ENCODE measurements at regions of chr3 and their contacts with region 1.

Region 1: DNA sequence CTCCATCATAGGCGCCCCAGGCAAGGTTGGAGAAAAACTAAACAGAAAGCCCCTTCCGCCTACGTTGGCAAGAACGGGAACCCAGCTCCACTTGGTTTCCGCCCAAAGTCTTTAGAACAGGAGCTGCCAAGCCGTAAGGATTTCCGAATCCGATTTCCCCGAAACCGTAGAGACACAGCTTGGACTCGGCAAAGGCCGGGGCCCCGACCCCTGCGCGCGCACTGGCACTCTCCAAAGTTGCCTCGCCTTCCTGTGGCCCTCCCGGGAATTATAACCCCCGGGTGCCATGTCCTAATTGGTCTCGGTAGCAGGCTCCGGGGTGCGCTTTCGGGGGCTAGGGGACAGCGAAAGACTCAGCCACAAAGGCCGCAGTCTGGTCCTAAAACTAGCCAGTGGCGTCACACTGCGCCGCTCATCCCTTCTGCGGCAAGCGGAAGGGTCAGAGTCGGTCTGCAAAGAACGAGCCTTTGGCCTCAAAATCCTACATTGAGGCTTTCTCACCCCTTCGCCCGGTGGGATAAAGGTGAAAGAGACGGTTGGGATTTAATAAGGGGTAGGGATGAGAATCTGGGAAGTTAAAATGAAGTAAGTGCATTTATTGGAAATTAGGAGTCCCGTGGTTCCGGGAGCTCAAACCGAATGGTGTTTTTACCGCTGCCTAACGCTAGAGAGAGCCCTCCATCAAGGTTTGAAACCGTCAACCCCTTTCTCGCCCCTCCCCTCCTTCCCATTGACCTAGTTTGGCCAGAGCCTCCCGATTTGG is 6.8 kb downstream of the BCL6 start:
- DNase-seq: peak; percentile 95
- H3K4me3 Mint-ChIP-seq: peak overlapping the region; percentile 98
- H3K27ac Mint-ChIP-seq: peak overlapping the region; percentile 100
- H3K4me1 Mint-ChIP-seq: peaks cover 44% of the 10 kb centered on the region
- H3K27me3 Mint-ChIP-seq: no peaks in the 10 kb centered on the region
- CTCF ChIP-seq: peak; percentile 63

Region 2: GRCh38 chr3:187491371-187491770 is 247.1 kb before region 1 on chr3:
- CTCF ChIA-PET with region 1: no interaction called
- POLR2A ChIA-PET with region 1: no interaction called
- intact Hi-C with region 1: no loop called
- DNase-seq: no peak
- H3K4me3 Mint-ChIP-seq: no peak overlapping the region
- H3K27ac Mint-ChIP-seq: no peak overlapping the region
- H3K4me1 Mint-ChIP-seq: no peaks in the 10 kb centered on the region
- H3K27me3 Mint-ChIP-seq: peaks cover 48% of the 10 kb centered on the region
- CTCF ChIP-seq: no peak

Region 3: GRCh38 chr3:187811585-187812250 is 73.2 kb after region 1 on chr3:
- CTCF ChIA-PET with region 1: interaction called, 17 read pairs
- POLR2A ChIA-PET with region 1: interaction called, 227 read pairs
- intact Hi-C with region 1: no loop called
- DNase-seq: peak; percentile 83
- H3K4me3 Mint-ChIP-seq: no peak overlapping the region
- H3K27ac Mint-ChIP-seq: peak overlapping the region; percentile 44
- H3K4me1 Mint-ChIP-seq: peaks cover 31% of the 10 kb centered on the region
- H3K27me3 Mint-ChIP-seq: no peaks in the 10 kb centered on the region
- CTCF ChIP-seq: no peak

Region 4: DNA sequence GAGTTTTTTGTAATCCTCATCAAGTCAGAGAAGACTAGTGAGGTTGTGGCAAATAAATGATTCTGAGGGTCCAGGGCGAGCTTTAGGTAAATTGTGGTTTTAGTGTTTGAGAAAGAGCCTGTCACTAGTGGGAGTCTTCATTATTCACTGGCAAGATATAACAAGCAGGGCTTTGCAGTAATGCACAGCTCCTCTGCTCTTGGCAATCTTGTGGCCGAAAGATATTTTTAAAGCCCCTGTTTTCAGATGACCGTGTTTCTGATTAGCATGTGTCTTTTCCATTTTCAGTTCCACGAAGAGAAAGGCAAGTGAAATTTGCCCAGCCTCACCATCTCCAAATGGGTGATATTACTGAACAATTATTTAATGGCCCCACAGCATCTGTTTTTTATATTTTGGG is 160.7 kb after region 1 on chr3:
- CTCF ChIA-PET with region 1: no interaction called
- POLR2A ChIA-PET with region 1: no interaction called
- intact Hi-C with region 1: no loop called
- DNase-seq: no peak
- H3K4me3 Mint-ChIP-seq: no peak overlapping the region
- H3K27ac Mint-ChIP-seq: no peak overlapping the region
- H3K4me1 Mint-ChIP-seq: no peaks in the 10 kb centered on the region
- H3K27me3 Mint-ChIP-seq: no peaks in the 10 kb centered on the region
- CTCF ChIP-seq: no peak

Region 5: DNA sequence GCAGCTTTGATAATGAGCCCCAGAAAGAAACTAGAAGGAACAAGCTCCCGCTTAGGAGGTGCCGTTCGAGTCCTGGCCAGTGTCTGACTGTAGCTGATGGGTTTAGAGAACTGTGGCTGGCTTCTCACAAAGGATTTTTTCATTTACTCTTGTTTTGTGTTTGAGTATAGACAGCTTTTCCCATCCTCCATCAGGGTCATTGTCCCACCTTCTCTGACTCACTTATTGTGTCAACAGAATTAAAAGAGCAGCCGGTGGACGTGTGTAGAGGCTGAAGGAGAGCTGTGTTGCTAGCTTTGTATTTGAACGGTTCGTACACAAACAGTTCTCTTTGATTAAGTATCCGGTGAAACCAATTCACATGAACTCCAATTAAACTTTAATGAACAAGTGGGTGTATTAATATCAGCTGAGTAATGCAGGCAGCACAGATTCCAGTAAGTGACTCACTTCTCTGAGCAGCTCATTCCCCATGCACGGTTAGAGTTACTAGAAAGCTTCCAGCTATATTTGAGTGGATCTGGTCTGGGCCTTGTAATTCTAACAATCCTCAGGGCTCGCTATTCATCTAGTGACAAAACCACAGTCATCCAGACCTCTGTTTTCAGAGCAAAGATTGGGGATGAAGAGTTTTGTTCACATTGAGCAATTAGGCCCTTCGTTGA is 556.4 kb after region 1 on chr3:
- CTCF ChIA-PET with region 1: interaction called, 9 read pairs
- POLR2A ChIA-PET with region 1: interaction called, 12 read pairs
- intact Hi-C with region 1: loop called (anchors 2 kb)
- DNase-seq: peak; percentile 83
- H3K4me3 Mint-ChIP-seq: peak overlapping the region; percentile 29
- H3K27ac Mint-ChIP-seq: peak overlapping the region; percentile 57
- H3K4me1 Mint-ChIP-seq: peaks cover 48% of the 10 kb centered on the region
- H3K27me3 Mint-ChIP-seq: no peaks in the 10 kb centered on the region
- CTCF ChIP-seq: no peak

Region 6: DNA sequence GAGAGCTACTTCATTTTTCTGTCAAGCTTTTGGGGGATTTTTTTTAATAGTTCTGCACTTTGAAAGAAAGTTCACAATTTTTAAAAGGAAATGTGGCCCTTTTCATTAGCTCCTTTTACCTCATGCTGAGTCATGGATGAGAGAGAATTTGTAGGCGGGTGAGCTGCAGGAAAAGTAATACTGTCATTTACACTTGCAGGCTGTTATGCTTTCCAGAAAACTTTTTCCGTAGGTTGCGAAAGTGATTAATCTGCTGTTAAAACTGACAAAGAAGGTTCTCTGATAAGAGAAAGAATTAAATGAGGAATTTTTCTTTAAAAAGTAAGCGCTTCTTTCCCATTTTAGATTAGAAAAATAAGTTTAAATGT is 845.6 kb after region 1 on chr3:
- CTCF ChIA-PET with region 1: interaction called, 4 read pairs
- POLR2A ChIA-PET with region 1: interaction called, 13 read pairs
- intact Hi-C with region 1: no loop called
- DNase-seq: peak; percentile 78
- H3K4me3 Mint-ChIP-seq: peak overlapping the region; percentile 62
- H3K27ac Mint-ChIP-seq: no peak overlapping the region
- H3K4me1 Mint-ChIP-seq: peaks cover 26% of the 10 kb centered on the region
- H3K27me3 Mint-ChIP-seq: no peaks in the 10 kb centered on the region
- CTCF ChIP-seq: no peak

Region 7: DNA sequence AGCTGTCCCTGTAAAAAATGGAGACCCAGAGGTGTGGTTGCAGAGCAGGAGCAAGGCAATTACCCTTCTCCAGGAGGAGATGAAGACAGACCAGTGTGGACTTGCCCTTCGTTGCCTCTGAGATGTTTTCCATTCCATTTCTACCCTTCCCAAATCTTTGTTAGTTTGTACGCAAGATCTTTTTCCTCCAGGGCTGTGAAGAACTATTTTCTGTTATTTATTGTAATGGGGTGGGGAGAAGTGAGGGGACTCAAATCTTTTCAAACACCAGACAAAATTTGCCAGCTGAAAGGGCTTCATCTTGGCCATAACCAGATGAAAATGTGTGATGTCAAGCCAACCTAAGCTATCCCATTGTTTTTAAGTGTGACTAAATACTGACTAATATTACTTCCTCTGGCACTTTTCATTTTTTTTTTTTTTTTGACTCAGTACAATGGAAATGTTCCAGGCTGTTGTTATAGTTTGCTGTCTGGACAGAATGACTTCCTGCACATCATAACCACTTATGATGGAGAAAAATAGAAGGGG is 1162.0 kb after region 1 on chr3:
- CTCF ChIA-PET with region 1: interaction called, 13 read pairs
- POLR2A ChIA-PET with region 1: interaction called, 15 read pairs
- intact Hi-C with region 1: no loop called
- DNase-seq: peak; percentile 87
- H3K4me3 Mint-ChIP-seq: peak overlapping the region; percentile 12
- H3K27ac Mint-ChIP-seq: peak overlapping the region; percentile 80
- H3K4me1 Mint-ChIP-seq: peaks cover 52% of the 10 kb centered on the region
- H3K27me3 Mint-ChIP-seq: no peaks in the 10 kb centered on the region
- CTCF ChIP-seq: no peak

Region 8: DNA sequence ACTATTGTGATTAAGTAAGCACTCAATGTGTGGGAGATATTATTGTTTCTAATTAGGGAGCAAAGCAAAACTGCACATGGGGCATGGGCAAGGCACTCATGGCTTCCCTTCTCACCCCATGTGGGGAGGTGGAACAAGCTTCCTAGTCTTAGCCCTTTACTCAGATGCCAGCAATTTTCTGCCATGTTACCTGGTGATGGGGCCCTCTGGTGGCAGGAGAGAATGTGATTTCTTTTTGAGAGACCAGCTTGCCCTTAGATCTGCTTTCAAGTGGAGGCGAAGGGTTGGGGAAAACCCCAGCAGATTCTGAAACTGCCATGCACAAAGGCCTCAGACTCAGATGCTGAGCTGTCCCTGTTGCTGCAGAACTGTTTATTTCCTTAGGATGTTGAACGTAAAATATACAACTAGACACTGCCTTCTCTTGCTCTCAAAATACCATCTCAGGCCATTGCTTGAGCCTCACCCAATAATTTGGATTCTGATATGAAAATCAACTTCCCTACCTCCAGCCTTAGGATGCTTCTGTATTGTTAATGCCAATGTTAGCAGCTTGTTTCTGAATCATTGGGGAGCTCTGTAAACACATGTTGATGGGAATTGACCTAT is 1303.1 kb after region 1 on chr3:
- CTCF ChIA-PET with region 1: interaction called, 3 read pairs
- POLR2A ChIA-PET with region 1: interaction called, 5 read pairs
- intact Hi-C with region 1: loop called (anchors 1 kb)
- DNase-seq: peak; percentile 75
- H3K4me3 Mint-ChIP-seq: no peak overlapping the region
- H3K27ac Mint-ChIP-seq: no peak overlapping the region
- H3K4me1 Mint-ChIP-seq: no peaks in the 10 kb centered on the region
- H3K27me3 Mint-ChIP-seq: no peaks in the 10 kb centered on the region
- CTCF ChIP-seq: peak; percentile 32

Measured in MCF 10A (cell line).